Activated naive CD4-positive, alpha-beta T cell treated with anti-CD3 and anti-CD28 coated beads for 36 hours (primary cell): ENCODE measurements at regions of chr12 and their contacts with region 1.

Region 1: DNA sequence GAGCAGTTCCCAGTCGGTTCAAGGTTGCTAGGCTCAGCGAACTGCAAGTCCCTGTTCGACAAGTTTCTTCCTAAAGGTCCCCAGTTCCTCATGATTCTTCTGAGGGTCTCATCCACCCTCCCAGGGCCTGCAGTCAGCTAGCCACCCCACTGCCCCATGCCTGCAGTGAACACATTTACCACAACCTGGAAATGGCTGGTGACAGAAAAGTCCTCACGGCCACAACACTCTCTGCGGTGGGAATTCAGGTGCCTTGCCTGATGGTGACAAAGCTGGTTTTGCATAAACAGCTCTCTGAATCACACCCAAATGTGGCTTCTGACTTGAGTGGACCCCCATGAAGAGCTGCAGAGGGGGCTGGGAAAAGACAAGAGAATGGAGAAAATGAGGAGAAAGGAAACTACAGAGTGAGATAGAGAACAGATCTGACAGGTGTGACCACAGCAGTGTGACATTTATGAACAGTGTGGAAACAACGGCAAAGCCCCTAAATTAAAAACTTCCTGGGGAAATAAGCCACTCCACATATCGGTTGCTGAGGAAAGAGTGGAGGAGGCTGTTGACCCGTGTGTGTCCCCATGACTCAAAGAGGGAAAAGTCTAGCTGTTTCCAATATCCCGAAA is 1.3 kb upstream of the CD27 start:
- DNase-seq: peak; percentile 79
- H3K4me3 Mint-ChIP-seq: peak overlapping the region; percentile 92
- H3K27ac Mint-ChIP-seq: peak overlapping the region; percentile 98
- H3K4me1 Mint-ChIP-seq: peaks cover 74% of the 10 kb centered on the region
- H3K27me3 Mint-ChIP-seq: no peaks in the 10 kb centered on the region

Region 2: DNA sequence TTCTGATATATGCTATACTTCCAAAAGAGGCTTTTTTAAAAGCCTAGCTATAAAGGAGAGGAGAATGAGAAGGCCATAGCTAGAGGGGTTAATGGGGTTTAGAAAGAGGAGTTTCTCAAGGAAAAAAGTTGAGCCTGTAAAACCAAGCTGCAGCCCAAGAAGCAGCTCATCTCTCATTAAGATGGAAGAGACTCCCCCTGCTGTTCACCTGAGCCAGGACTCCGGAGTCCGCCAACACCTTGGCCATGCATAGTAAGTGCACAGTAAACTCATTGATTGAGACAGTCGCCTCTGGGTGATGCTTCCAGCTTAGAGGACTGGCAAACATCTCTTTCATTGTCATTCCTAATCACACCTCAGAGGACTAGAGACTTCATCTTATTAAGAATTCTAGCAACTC is 544.6 kb before region 1 on chr12:
- CTCF ChIA-PET with region 1: no interaction called
- intact Hi-C with region 1: no loop called
- DNase-seq: no peak
- H3K4me3 Mint-ChIP-seq: no peak overlapping the region
- H3K27ac Mint-ChIP-seq: no peak overlapping the region
- H3K4me1 Mint-ChIP-seq: no peaks in the 10 kb centered on the region
- H3K27me3 Mint-ChIP-seq: peaks cover 20% of the 10 kb centered on the region

Region 3: GRCh38 chr12:6461401-6462233 is 18.1 kb after region 1 on chr12:
- CTCF ChIA-PET with region 1: interaction called, 159 read pairs
- intact Hi-C with region 1: loop called (anchors 1 kb)
- DNase-seq: peak; percentile 93
- H3K4me3 Mint-ChIP-seq: peak overlapping the region; percentile 80
- H3K27ac Mint-ChIP-seq: peak overlapping the region; percentile 97
- H3K4me1 Mint-ChIP-seq: peaks cover 89% of the 10 kb centered on the region
- H3K27me3 Mint-ChIP-seq: no peaks in the 10 kb centered on the region

Region 4: DNA sequence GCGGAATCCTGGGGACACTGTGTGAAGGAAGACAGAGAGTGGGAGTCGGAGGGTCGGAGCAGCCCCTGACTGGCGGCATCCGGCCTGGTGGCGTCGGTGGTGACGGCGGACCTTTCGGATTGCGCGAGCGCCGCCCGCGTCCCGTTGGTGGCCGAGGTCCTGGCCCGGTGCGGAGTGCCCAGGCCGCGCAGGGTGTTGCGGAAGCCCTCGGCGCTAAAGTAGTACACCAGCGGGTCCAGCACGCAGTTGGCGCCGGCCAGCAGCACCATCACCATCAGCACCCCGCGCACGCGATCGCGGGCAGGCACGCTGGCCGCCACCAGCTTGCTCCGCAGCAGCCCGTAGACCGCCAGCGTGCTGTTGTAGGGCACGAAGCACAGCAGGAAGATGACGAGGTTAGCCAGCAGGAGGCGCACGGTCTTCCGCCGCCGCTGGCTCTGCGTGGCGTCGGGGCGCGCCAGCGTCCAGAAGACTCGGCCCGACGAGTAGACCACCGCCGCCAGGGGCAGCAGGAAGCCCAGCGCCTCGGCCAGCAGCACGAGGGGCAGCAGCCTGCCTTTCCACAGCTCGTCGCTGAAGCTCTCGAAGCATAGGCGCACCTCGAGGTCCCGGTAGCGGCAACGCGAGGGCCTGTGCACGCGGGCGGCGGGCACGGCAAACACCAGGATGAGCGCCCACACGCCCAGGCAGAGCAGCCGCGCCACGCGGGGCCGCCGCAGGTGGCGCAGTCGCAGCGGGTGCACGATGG is 176.8 kb after region 1 on chr12:
- CTCF ChIA-PET with region 1: no interaction called
- intact Hi-C with region 1: no loop called
- DNase-seq: peak; percentile 67
- H3K4me3 Mint-ChIP-seq: peak overlapping the region; percentile 30
- H3K27ac Mint-ChIP-seq: no peak overlapping the region
- H3K4me1 Mint-ChIP-seq: peaks cover 8% of the 10 kb centered on the region
- H3K27me3 Mint-ChIP-seq: no peaks in the 10 kb centered on the region